ENCODE measurements at regions of chr16 and their contacts with region 1.

Region 1: GRCh38 chr16:66539623-66540469 is 10.1 kb downstream of the TK2 start:
- DNase-seq: peak; percentile 77
- H3K4me3 ChIP-seq: peak overlapping the region; percentile 12
- H3K27ac ChIP-seq: no peak overlapping the region
- H3K4me1 ChIP-seq: peaks cover 34% of the 10 kb centered on the region
- CTCF ChIP-seq: no peak

Region 2: DNA sequence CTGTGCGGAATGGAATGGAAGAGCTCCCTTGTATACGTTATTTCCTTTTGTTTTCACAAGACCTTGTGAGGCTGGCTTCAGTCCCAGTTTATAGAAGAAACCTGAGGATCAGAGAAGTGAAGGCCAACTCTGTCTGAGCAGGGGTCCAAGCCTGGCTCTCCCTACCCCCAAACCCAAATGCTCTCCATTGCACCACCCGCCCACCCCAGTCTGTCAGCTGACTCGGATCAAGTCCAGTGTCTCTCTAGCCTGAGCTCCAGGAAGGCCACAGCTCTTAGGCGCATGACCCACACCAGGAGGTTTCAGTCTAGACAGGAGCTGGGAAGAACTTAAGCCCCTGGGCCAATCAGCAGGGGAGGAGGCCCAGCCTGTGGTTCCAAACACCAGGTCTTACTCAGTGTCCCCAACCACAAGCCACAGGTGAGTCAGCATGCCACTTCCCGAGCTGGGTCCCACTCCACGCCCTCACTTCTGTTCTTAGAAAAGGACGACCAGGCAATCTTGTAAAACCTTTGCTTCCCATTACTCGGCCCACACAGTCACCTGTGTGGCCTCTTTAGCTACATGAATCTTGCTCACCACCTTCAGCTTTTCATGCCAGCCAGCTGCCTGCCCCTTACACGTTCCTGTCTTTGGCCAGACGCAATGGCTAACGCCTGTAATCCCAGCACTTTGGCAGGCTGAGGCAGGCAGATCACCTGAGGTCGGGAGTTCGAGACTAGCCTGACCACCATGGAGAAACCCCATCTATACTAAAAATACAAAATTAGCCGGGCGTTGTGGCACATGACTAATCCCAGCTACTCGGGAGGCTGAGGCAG is 17.7 kb before region 1 on chr16:
- CTCF ChIA-PET with region 1: interaction called, 3 read pairs
- POLR2A ChIA-PET with region 1: interaction called, 15 read pairs
- intact Hi-C with region 1: loop called (anchors 2 kb)
- DNase-seq: peak; percentile 14
- H3K4me3 ChIP-seq: no peak overlapping the region
- H3K27ac ChIP-seq: no peak overlapping the region
- H3K4me1 ChIP-seq: peaks cover 64% of the 10 kb centered on the region
- CTCF ChIP-seq: no peak